BJ (cell line): ENCODE measurements at regions of chr3 and their contacts with region 1.

Region 1: DNA sequence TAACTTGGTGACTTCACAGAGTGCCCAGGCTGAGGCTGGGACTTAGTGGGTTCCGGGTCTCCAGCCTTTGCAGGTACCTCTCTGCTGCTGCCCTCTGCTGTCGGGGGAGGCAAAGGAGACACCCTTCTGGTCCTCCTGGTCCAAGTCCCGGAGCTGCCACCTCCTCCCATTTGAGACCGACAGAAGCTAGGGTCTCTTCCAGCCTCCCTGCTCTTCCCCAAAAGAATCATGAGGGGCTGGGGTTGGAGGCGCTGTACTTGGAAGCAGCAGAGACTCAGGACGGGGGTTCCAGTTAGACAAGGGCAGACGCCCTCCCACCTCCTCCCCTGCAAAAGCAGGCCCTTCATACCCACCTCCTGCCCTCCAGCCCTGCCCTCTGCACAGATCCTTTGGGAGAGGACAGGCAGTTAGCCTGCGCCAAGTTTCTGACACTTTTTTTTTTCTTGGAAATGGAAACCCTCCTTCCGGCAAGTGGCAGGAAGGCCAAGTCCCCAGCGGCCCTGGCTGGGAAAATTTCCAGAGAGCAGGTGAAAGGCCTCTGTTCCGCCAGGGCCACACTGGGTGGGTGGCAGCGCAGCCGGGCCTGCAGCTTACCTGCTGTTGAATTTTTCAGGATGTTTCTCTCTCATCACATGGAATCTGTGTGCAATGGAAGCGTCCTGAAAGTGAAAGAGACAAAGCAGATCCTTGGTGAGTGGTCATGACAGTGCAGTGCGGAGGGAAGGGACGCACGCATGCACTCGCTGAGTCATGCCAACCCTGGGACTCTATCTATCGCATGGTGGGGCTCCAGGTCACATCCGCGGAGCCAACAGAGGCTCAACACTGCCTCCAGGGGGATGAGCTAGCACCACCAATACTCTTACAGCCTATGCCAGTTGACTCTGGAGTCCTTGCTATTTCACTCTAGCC is 119.9 kb downstream of the DGKG start:
- DNase-seq: no peak
- H3K4me3 ChIP-seq: no peak overlapping the region
- H3K27me3 ChIP-seq: peaks cover 2% of the 10 kb centered on the region; the same call in 1 of the 2 replicates
- CTCF ChIP-seq: peak; percentile 52

Region 2: GRCh38 chr3:185983495-185984141 is 258.5 kb before region 1 on chr3:
- CTCF ChIA-PET with region 1: interaction called, 15 read pairs
- POLR2A ChIA-PET with region 1: no interaction called
- DNase-seq: no peak
- H3K4me3 ChIP-seq: no peak overlapping the region
- H3K27me3 ChIP-seq: peaks cover 3% of the 10 kb centered on the region; the same call in 1 of the 2 replicates
- CTCF ChIP-seq: peak; percentile 90

Region 3: GRCh38 chr3:186365202-186365974 is 123.2 kb after region 1 on chr3:
- CTCF ChIA-PET with region 1: no interaction called
- POLR2A ChIA-PET with region 1: no interaction called
- DNase-seq: no peak
- H3K4me3 ChIP-seq: no peak overlapping the region
- H3K27me3 ChIP-seq: peaks cover 46% of the 10 kb centered on the region
- CTCF ChIP-seq: no peak